Activated naive CD4-positive, alpha-beta T cell treated with anti-CD3 and anti-CD28 coated beads, Interleukin-2, amount 10 ng/mL, durations not matched to agents 7 days and 5 days (primary cell): ENCODE measurements at regions of chr14 and their contacts with region 1.

Region 1: GRCh38 chr14:72443991-72444441 is 449.9 kb downstream of the DPF3 start:
- DNase-seq: peak; percentile 71
- H3K4me3 Mint-ChIP-seq: peak overlapping the region; percentile 17
- H3K27ac Mint-ChIP-seq: peak overlapping the region; percentile 66
- H3K4me1 Mint-ChIP-seq: peaks cover 88% of the 10 kb centered on the region
- H3K27me3 Mint-ChIP-seq: peaks cover 4% of the 10 kb centered on the region

Region 2: DNA sequence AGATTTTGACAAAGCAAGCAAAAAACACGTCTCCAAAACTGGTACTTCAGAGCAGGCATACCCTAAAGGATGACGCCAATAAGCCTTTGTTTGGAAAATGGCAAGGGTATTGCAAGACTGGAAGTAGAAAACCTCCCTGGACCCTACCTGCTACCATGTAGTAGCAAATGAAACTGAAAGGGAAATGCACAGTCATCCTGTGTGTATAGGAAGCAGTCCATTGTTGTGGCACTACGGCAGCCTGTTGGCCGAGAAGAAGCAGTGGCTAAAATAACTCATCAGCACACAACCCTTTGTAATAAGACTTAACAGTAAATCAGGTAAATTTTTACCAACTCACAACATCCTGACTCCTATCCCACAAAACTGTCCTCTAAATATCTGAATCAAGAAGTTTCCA is 125.4 kb before region 1 on chr14:
- CTCF ChIA-PET with region 1: no interaction called
- DNase-seq: peak; percentile 33
- H3K4me3 Mint-ChIP-seq: no peak overlapping the region
- H3K27ac Mint-ChIP-seq: no peak overlapping the region
- H3K4me1 Mint-ChIP-seq: peaks cover 11% of the 10 kb centered on the region
- H3K27me3 Mint-ChIP-seq: peaks cover 9% of the 10 kb centered on the region

Region 3: GRCh38 chr14:72366619-72367018 is 77.4 kb before region 1 on chr14:
- CTCF ChIA-PET with region 1: no interaction called
- DNase-seq: no peak
- H3K4me3 Mint-ChIP-seq: no peak overlapping the region
- H3K27ac Mint-ChIP-seq: no peak overlapping the region
- H3K4me1 Mint-ChIP-seq: no peaks in the 10 kb centered on the region
- H3K27me3 Mint-ChIP-seq: peaks cover 14% of the 10 kb centered on the region

Region 4: DNA sequence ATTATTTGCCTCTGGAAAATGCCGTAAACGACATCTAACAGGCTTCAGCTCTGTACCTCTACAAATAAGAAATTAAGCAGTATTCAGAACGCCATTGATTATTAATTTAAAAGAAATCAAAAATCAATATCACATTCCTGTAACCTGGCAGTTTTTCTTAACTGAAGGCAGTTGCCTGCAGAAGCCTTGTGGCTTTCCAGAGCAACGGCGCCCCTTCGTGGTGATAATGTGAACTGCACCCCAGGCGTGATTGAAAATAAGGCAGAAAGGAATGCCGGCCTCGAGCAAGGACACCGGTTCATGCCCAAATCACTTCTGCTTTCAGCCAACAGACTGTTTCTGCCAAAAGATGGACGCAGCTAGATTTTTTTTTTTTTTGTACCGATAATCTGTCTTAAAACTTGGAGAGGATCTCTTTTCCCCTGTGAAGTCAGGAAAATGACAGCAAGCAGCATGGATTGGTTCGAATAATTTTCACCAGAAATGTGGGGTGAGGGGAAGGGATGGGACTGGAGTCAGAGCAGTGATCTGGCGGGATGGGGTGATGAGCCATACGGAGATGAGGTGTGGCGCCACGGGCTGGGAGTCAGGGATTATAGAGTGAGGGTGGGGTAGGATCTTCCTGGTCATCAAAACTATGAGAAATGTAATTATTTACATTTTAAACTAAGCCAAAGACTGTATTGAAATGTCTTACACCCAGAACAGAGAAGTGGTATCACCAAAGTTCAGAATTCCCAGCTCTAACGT is 23.1 kb before region 1 on chr14:
- CTCF ChIA-PET with region 1: interaction called, 18 read pairs
- DNase-seq: peak; percentile 85
- H3K4me3 Mint-ChIP-seq: no peak overlapping the region
- H3K27ac Mint-ChIP-seq: no peak overlapping the region
- H3K4me1 Mint-ChIP-seq: peaks cover 18% of the 10 kb centered on the region
- H3K27me3 Mint-ChIP-seq: peaks cover 47% of the 10 kb centered on the region